Activated CD4-positive, alpha-beta memory T cell treated with anti-CD3 and anti-CD28 coated beads for 36 hours (primary cell): ENCODE measurements at regions of chr11 and their contacts with region 1.

Region 1: GRCh38 chr11:68257475-68258362 is 14.1 kb downstream of the C11orf24 start:
- DNase-seq: peak; percentile 94
- H3K4me3 Mint-ChIP-seq: no peak overlapping the region
- H3K27ac Mint-ChIP-seq: no peak overlapping the region
- H3K4me1 Mint-ChIP-seq: peaks cover 3% of the 10 kb centered on the region
- H3K27me3 Mint-ChIP-seq: no peaks in the 10 kb centered on the region

Region 2: DNA sequence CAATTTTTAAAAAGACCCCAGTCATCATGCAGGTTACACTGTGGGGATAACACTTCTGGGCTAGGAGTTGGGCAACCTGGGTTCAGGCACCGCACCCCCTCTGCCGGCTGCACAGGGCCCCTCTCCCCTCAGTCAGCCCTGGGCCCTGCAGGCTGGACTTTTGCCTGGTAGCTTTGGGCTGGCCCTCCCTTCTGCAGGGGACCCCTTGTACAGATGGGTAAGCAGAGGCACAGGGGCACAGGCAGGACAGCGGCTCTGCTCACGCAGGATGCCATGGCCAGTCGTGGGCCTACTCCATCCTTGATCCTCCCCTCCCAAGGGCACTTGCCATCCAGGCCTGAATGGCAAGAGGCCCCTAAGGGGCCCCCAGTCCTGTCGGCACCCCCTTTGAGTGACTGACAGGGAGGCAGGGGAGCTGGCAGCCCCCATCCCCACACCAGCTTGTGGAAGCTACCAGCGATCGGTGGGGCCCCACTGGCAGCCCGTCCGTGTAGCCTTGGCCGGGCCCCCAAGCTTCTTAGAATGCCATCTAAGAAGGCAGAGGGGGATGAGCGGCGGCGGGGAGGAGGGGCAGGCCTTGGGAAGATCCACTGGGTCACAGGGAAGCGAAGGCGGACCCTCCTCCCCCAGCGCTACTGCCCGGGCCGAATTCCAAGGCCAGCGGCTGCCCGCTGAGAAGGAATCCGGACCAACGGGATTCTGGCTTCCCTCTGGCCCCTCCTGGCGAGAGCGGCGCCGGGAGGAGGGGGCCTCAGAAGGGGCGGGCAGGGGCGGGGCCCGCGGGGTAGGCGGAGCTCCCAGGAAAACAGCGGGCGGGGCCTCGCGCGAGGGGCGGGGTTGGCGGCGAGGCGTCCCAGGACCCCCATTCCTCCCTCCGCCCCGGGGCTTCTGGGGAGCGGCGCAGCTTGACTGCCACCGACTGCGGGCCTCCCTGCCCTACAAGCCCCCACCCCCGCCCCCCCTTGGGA is 129.7 kb before region 1 on chr11:
- CTCF ChIA-PET with region 1: no interaction called
- POLR2A ChIA-PET with region 1: no interaction called
- intact Hi-C with region 1: no loop called
- DNase-seq: no peak
- H3K4me3 Mint-ChIP-seq: no peak overlapping the region
- H3K27ac Mint-ChIP-seq: no peak overlapping the region
- H3K4me1 Mint-ChIP-seq: no peaks in the 10 kb centered on the region
- H3K27me3 Mint-ChIP-seq: peaks cover 15% of the 10 kb centered on the region

Region 3: GRCh38 chr11:68271781-68272608 is 14.3 kb after region 1 on chr11 and contains the start of gene C11orf24:
- CTCF ChIA-PET with region 1: interaction called, 28 read pairs
- POLR2A ChIA-PET with region 1: interaction called, 5 read pairs
- intact Hi-C with region 1: no loop called
- DNase-seq: peak; percentile 95
- H3K4me3 Mint-ChIP-seq: peak within 1 kb of the TSS; percentile 97
- H3K27ac Mint-ChIP-seq: peak within 1 kb of the TSS; percentile 93
- H3K4me1 Mint-ChIP-seq: peaks cover 24% of the 10 kb centered on the region
- H3K27me3 Mint-ChIP-seq: no peaks in the 10 kb centered on the region
- total RNA-seq, gene C11orf24: 28.0 to 28.9 TPM

Region 4: DNA sequence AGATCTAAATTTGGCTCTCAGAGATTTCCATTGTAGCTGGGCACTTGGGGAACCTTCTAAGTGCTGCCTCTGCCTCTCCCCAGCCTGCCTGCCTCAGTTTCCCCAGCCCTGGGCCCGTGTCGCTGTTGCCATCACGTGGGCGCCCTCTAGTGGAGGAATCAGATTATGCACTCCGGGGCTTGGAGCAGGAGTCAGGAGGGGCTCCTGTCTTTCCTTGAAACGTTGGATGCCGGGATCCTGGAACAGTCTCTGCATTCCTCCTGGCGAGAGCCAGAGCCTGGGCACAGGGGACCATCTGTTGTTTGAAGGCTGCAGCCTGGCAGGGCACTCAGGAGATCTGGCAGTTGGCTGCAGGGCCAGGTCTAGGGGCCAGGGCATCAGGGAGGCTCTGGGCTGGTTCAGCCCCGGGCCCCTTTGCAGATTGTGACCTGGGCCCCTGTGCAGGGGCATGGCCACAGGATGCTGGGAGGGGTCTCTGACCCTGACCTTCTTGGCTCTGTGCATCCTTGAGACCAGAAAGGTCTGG is 126.3 kb after region 1 on chr11:
- CTCF ChIA-PET with region 1: interaction called, 7 read pairs
- POLR2A ChIA-PET with region 1: no interaction called
- intact Hi-C with region 1: loop called (anchors 2 kb)
- DNase-seq: peak; percentile 70
- H3K4me3 Mint-ChIP-seq: no peak overlapping the region
- H3K27ac Mint-ChIP-seq: no peak overlapping the region
- H3K4me1 Mint-ChIP-seq: peaks cover 9% of the 10 kb centered on the region
- H3K27me3 Mint-ChIP-seq: peaks cover 11% of the 10 kb centered on the region

Region 5: DNA sequence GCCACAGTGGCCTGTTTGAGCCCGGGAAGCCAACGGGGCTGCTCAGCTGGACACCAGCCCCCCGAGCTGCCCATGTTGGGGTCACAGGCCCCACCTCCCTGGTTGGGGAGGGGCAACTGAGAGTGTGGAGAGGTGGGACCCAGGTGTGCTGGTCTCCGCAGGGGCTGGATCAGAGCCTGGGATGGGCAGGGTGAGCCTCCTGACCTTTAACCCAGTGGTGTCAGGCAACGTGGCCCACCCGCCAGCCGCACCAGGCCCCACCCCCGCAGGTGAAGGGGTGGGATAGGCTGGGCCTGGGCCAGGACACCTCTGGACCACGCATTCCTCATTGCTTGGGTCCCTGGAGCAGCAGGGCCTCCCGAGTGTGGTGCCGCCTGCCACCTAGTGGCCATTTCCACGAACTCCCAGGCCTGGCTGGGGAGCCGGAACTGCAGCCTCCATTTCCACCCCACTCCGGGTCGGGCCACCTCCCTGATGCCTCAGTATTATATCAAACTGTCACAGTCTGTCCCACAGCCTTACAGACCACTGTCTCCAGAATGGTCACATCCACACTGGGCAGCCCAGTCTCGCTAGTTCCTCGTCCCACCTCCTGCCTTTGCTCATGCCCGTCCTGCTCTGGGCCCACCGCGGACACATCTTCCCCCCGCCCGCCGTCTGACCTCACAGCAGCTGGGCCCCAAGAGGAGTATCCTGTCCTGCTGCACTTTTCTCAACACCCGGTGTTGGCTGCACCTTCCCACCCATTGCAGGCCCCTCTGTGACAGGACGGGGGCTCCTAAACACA is 189.5 kb after region 1 on chr11:
- CTCF ChIA-PET with region 1: interaction called, 9 read pairs
- POLR2A ChIA-PET with region 1: no interaction called
- intact Hi-C with region 1: loop called (anchors 2 kb)
- DNase-seq: peak; percentile 85
- H3K4me3 Mint-ChIP-seq: no peak overlapping the region
- H3K27ac Mint-ChIP-seq: no peak overlapping the region
- H3K4me1 Mint-ChIP-seq: peaks cover 5% of the 10 kb centered on the region
- H3K27me3 Mint-ChIP-seq: no peaks in the 10 kb centered on the region

Region 6: DNA sequence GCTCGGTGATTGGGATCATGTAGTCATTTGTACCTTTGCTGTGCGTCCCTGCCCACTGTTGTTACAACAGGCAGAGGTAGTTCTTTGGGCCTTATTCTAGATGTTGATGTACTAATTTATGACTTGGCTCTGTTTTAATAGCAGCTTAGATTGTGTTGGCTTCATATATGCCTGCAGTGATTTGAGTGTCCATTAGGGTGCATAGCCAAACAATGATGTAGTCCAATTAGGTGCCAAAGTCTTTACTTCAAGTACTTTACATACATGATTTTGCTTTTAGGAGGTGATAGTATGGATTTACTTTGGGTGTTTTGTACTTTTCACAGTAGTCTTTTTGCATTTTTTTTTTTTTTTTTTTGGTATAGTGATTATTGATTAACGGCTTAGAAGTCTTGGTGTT is 249.2 kb after region 1 on chr11:
- CTCF ChIA-PET with region 1: no interaction called
- POLR2A ChIA-PET with region 1: no interaction called
- intact Hi-C with region 1: no loop called
- DNase-seq: no peak
- H3K4me3 Mint-ChIP-seq: no peak overlapping the region
- H3K27ac Mint-ChIP-seq: no peak overlapping the region
- H3K4me1 Mint-ChIP-seq: peaks cover 67% of the 10 kb centered on the region
- H3K27me3 Mint-ChIP-seq: no peaks in the 10 kb centered on the region